HEK293 (cell line): ENCODE measurements at regions of chr3 and their contacts with region 1.

Region 1: GRCh38 chr3:57409456-57409855 is 117.0 kb upstream of the ASB14 start:
- H3K4me3 ChIP-seq: no peak overlapping the region
- H3K27ac ChIP-seq: no peak overlapping the region
- H3K4me1 ChIP-seq: no peaks in the 10 kb centered on the region
- CTCF ChIP-seq: no peak

Region 2: DNA sequence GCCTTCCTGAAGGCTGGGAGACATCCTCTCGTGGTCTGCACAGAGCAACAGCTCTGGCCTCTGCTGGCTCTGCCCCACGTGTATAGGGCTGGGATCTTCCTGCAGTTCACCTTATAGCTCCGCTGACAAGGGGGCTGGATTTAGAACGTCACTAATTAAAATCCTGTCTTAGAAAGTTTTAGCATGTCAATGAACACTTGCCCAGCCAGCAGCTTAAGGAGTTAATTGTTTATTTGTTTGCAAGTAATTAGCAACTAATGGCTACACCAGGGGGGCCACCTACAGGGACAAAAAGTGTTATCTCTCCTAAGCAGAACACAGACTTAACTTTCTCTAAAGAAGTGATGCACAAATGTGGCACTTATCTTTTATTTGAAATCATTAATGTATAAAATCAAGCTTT is 209.6 kb before region 1 on chr3 and contains the start of gene HESX1:
- CTCF ChIA-PET with region 1: no interaction called
- POLR2A ChIA-PET with region 1: interaction called, 11 read pairs
- H3K4me3 ChIP-seq: no peak within 1 kb of the TSS
- H3K27ac ChIP-seq: no peak within 1 kb of the TSS
- H3K4me1 ChIP-seq: no peaks in the 10 kb centered on the region; the same call in 1 of the 2 replicates
- CTCF ChIP-seq: no peak

Region 3: DNA sequence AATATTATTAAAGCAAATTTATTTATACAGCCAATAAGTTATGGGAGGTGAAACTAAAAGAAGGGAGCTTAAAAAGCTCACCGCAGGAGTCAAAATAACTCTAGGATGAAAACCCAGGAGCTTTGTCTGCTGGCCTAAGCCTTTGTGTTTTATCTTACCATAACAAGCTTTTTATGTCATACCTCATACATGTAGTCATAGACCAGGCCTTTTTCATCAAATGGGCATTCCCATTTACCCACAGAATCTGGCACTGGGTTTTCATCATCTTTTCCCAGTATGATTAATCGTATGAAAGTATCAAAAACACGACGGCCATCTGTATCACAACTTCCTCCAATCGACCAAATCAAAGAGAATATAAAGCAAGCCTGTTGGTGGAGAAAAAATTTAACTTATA is 11.9 kb after region 1 on chr3:
- CTCF ChIA-PET with region 1: no interaction called
- POLR2A ChIA-PET with region 1: no interaction called
- H3K4me3 ChIP-seq: no peak overlapping the region
- H3K27ac ChIP-seq: no peak overlapping the region
- H3K4me1 ChIP-seq: no peaks in the 10 kb centered on the region
- CTCF ChIP-seq: no peak